Dendritic cell treated with granulocyte-macrophage colony-stimulating factor and Interleukin-4, amounts not matched to agents 40 ng/mL and 50 ng/mL, for 4 days (primary cell): ENCODE measurements at regions of chr3 and their contacts with region 1.

Region 1: DNA sequence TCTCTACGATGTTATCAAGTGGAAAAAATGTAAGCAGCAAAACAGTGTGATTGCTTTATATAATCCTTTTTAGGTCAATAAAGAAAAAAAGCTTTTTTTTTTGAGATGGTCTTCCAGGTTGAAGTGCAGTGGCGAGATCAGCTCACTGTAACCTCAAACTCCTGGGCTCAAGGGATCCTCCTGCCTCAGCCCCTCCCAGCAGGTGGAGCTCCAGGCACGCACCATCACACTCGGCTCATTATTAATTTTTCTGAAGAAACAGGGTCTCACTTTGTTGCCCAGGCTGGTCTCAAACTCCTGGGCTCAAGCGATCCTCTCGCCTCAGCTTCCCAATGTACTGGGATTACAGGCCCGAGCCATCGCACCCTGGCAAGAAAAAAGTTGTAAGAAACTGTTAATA is 17.3 kb downstream of the RNF168 start:
- H3K4me3 Mint-ChIP-seq: no peak overlapping the region
- H3K27ac Mint-ChIP-seq: no peak overlapping the region
- H3K4me1 Mint-ChIP-seq: peaks cover 21% of the 10 kb centered on the region
- H3K27me3 Mint-ChIP-seq: no peaks in the 10 kb centered on the region

Region 2: DNA sequence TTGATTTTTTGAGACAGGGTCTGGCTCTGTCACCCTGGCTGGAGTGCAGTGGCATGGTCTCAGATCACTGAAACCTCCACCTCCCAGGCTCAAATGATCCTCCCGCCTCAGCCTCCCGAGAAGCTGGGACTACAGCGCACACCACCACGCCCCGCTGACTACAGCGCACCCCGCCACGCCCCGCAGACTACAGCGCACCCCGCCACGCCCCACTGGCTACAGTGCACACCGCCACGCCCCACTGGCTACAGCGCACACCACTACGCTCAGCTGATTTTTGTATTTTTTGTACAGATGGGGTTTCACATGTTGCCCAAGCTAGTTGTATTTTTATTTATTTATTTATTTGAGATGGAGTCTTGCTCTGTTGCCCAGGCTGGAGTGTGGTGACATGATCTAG is 234.3 kb before region 1 on chr3:
- intact Hi-C with region 1: loop called (anchors 10 kb)
- H3K4me3 Mint-ChIP-seq: no peak overlapping the region
- H3K27ac Mint-ChIP-seq: no peak overlapping the region
- H3K4me1 Mint-ChIP-seq: no peaks in the 10 kb centered on the region
- H3K27me3 Mint-ChIP-seq: no peaks in the 10 kb centered on the region

Region 3: DNA sequence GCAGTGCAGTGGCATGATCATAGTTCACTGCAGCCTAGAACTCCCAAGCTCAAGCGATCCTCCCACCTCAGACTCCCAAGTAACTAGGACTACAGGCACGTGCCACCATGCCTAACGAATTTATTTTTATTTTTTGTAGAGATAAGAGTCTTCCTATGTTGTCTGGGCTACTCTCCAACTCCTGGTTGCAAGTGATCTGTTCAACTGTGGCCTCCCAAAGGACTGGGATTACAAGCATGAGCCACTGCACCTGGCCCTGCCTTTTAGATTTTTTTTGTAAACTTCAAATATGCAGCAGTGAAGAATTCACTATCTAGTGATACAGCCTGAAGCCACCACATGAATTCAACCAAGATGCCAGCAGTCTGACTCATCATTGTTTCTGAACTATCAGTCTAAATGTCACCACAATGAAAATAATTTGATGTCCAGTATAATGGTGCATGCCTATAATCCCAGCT is 86.7 kb before region 1 on chr3:
- intact Hi-C with region 1: no loop called
- H3K4me3 Mint-ChIP-seq: no peak overlapping the region
- H3K27ac Mint-ChIP-seq: no peak overlapping the region
- H3K4me1 Mint-ChIP-seq: peaks cover 5% of the 10 kb centered on the region
- H3K27me3 Mint-ChIP-seq: no peaks in the 10 kb centered on the region

Region 4: DNA sequence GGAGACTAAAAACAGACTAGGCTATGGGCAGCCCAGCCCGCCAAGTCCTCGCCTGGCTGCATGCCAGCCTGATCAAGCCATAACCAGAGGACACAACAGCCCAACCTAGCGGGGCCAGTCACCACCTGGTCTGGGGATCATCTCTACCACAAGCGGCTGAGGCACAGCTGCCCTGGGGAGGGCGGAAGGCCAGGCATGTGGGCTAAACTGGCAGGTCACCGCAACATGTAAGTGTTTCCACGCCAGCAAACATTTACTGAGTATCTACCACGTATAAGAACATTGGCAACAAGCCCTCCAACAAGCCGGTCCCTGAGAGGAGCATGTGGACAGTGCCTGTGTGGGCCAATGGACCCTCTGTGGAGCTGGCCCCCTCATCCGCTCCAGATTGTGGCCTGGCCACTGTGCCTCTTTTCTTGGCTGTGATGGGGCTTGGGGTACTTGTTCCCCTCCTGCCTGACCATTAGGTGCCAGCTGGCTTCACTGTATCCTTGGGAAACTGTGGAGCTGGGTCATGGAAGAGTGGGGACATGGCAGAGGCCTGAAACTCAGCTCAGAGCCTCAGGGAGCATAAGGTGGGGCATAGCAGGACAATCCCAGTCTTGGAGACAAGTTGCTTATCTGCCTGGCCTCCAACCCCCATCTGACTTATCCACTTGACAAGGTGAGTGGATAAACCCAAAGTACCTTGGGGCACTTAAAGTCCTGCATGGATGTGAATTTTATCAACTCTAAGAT is 63.0 kb before region 1 on chr3:
- intact Hi-C with region 1: no loop called
- H3K4me3 Mint-ChIP-seq: no peak overlapping the region
- H3K27ac Mint-ChIP-seq: peak overlapping the region; percentile 34
- H3K4me1 Mint-ChIP-seq: peaks cover 54% of the 10 kb centered on the region
- H3K27me3 Mint-ChIP-seq: no peaks in the 10 kb centered on the region

Region 5: DNA sequence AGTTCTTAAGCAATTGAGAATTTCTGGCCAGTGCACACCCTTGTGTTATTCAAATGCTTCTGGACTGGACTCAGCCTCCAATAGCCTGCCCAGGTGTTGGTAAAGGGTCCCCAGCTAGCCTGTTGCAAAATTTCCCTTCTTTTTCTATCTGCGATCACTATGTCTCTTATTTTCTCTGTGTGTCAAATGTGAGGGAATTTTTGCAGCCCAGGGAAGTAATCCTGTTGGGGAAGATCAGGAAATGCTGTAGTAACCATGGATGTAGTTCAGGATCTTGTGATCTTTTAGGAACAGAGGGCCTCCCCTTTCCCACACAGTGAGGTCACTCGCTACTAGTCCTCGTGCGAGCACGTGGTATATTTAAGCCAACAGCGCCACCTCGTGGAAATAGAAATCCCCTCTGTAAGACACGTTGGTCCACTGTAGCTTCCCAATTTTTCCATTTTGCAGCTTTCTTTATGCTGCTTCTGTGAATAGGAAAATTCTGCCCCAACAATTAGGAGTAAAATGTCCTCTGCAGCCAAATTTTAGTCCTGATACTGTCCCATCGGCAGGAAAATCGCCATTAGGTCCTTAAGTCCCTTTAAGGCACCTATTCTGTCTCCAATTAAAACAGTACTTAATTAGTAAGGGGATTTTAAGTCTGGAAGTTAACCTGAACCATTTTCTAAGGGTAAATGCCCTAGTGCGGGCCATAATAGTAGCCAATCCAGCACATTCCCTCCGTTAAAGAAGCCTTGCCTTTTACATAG is 32.9 kb after region 1 on chr3:
- intact Hi-C with region 1: loop called (anchors 2 kb)
- H3K4me3 Mint-ChIP-seq: no peak overlapping the region
- H3K27ac Mint-ChIP-seq: no peak overlapping the region
- H3K4me1 Mint-ChIP-seq: no peaks in the 10 kb centered on the region
- H3K27me3 Mint-ChIP-seq: no peaks in the 10 kb centered on the region